Dorsolateral prefrontal cortex (tissue), 120 donors: ENCODE measurements at regions of chr2 and their contacts with region 1.

Region 1: GRCh38 chr2:118013724-118014491 is at the start of gene CCDC93:
- DNase-seq: peak; percentile 52 to 90 (median 64)
- H3K4me3 ChIP-seq: peak within 1 kb of the TSS; percentile 69 to 100 (median 96)
- H3K27ac ChIP-seq: peak within 1 kb of the TSS in 51 of 59 donors; percentile 6 to 93 (median 73)
- H3K27me3 ChIP-seq: no peaks in the 10 kb centered on the region
- CTCF ChIP-seq: peak in 24 of 56 donors; percentile 12 to 68 (median 38)
- total RNA-seq, gene CCDC93: 28.1 to 61.0 (median 42.1) TPM

Region 2: DNA sequence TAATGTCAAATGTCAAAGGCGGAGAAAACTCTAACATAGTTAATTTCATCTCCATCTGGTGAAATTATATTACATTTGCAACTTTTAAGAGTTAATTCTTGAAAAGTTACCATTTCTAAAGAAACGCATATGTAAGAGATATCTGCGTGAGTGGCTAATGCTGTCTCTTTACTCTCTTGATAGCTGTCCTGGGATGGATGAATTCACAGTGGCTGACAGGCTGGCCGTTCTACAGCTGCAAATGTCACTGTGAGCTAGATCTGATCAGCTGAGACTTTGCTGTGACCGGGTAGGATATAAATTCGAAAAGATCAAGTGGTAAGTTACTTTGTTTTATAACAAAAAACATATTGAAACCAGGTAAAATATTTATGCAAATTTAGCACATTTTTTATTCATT is 756.5 kb before region 1 on chr2:
- intact Hi-C with region 1: no loop called
- DNase-seq: no peak
- H3K4me3 ChIP-seq: no peak overlapping the region
- H3K27ac ChIP-seq: no peak overlapping the region
- H3K27me3 ChIP-seq: no peaks in the 10 kb centered on the region
- CTCF ChIP-seq: no peak

Region 3: DNA sequence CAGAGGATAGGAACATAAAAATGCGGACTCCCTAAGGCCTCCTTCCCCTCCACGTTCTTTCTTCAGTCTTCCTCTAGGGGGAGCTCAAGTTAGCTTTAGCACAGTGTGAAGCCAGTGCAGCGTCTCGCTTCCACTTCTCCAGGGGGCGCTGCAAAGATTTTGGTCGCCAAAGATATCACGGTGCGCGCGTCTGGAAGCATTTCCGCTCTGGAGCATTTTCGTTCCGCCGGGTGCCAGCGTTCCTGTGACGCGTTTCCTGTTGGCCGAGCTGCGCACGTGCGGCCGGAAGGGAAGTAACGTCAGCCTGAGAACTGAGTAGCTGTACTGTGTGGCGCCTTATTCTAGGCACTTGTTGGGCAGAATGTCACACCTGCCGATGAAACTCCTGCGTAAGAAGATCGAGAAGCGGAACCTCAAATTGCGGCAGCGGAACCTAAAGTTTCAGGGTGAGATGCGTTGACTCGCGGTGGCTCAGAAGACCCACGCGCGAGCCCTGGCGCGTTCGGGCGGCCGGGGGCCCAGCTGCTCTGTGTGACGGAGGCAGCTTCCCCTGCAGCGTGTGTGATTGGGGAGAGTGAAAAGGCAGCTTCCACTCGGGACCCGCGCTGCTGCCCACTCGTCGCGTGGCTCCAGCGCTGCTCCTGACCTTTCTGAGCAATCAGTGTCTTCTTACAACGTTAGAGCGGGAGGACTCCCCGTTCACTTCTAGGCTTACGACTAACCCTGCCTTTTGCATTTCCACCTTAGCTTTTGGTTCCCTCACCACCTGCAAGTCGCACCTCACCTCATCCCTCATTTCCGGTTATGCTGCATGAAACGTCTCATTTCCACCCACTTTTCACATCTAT is 199.3 kb before region 1 on chr2 and contains the start of gene DDX18:
- intact Hi-C with region 1: loop called in 1 of 2 experiments (anchors 5 kb)
- DNase-seq: peak; percentile 94 to 98 (median 97)
- H3K4me3 ChIP-seq: peak within 1 kb of the TSS; percentile 60 to 100 (median 92)
- H3K27ac ChIP-seq: peak within 1 kb of the TSS in 56 of 59 donors; percentile 29 to 91 (median 76)
- H3K27me3 ChIP-seq: no peaks in the 10 kb centered on the region
- CTCF ChIP-seq: peak; percentile 98 to 100 (median 100)
- total RNA-seq, gene DDX18: 22.2 to 51.3 (median 39.9) TPM